A549 (cell line): ENCODE measurements at regions of chr20 and their contacts with region 1.

Region 1: DNA sequence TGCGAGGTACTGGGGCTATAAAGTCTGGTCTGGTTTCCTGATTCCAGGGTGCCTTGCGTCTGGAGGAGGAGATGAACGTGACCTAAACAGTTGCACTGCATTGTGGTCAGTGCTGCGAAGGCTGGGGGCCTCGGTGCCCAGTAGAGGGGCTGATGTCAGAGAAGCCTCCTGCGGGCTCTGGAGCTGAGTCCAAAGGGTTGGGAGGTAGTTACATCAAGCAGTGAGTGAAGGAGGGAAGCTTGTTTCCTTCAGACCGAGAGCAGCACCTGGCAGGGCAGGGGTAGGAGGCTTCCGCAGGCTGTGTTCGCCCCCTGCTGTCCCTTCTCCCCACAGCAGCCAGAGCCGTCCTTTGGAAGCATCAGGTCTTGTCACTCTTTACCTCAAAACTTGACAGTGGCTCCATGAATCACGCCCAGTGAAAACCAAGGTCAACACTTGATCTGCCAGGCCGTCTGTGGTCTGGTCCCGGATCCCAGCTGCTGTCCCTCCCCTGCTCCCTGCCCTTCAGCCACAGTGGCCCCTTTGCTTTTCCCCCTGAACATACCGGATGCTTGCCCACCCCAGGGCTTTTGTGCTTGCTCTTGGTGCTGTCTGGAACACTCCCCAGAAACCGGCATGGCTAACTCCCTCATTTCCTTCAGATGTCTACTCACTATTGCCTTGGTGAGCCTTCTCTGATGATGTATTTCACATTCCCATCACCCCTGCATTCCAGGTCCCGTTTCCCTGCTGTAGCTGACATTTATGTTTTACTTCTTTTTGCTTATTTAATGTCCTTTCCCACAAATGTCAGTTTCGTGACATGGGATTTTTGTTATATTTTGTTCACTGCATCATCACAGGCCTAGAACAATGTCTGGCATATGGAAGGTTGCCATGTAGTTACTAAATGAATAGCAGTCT is 7.0 kb downstream of the DYNLRB1 start:
- DNase-seq: peak; percentile 57 to 82
- ATAC-seq: peak; percentile 54 to 73
- H3K4me3 ChIP-seq: no peak overlapping the region
- H3K27ac ChIP-seq: 0 out of 6 replicates have a peak overlapping the region, but pooled peaks of 1 of the 2 experiments have one; percentile 12
- H3K4me1 ChIP-seq: peaks cover 50% of the 10 kb centered on the region
- CTCF ChIP-seq: peak; percentile 60
- EP300 ChIP-seq: no peak
- POLR2A ChIP-seq: no peak
- RAD21 ChIP-seq: peak; percentile 78 to 91

Region 2: GRCh38 chr20:34190679-34191090 is 332.5 kb before region 1 on chr20:
- CTCF ChIA-PET with region 1: interaction called, 13 read pairs
- POLR2A ChIA-PET with region 1: interaction called, 3 read pairs
- DNase-seq: peak; percentile 82 to 88
- ATAC-seq: peak; percentile 97 to 99
- H3K4me3 ChIP-seq: no peak overlapping the region
- H3K27ac ChIP-seq: no peak overlapping the region
- H3K4me1 ChIP-seq: no peaks in the 10 kb centered on the region
- CTCF ChIP-seq: peak; percentile 82
- EP300 ChIP-seq: no peak
- POLR2A ChIP-seq: no peak
- RAD21 ChIP-seq: peak; percentile 91 to 93

Region 3: GRCh38 chr20:34302723-34303528 is 220.3 kb before region 1 on chr20 and contains the start of gene AHCY:
- CTCF ChIA-PET with region 1: interaction called, 13 read pairs
- POLR2A ChIA-PET with region 1: no interaction called
- DNase-seq: peak; percentile 95 to 98
- ATAC-seq: peak; percentile 96
- H3K4me3 ChIP-seq: peak within 1 kb of the TSS; percentile 90
- H3K27ac ChIP-seq: peak within 1 kb of the TSS; percentile 87 to 94
- H3K4me1 ChIP-seq: peaks cover 36% of the 10 kb centered on the region
- CTCF ChIP-seq: no peak
- EP300 ChIP-seq: no peak
- POLR2A ChIP-seq: peak; percentile 89
- RAD21 ChIP-seq: no peak
- polyA plus RNA-seq, gene AHCY: 274 and 278 TPM in 2 replicates

Region 4: GRCh38 chr20:34506480-34506879 is 16.7 kb before region 1 on chr20:
- CTCF ChIA-PET with region 1: interaction called, 11 read pairs
- POLR2A ChIA-PET with region 1: no interaction called
- DNase-seq: no peak
- ATAC-seq: no peak
- H3K4me3 ChIP-seq: no peak overlapping the region
- H3K27ac ChIP-seq: no peak overlapping the region
- H3K4me1 ChIP-seq: no peaks in the 10 kb centered on the region
- CTCF ChIP-seq: no peak
- EP300 ChIP-seq: no peak
- POLR2A ChIP-seq: no peak
- RAD21 ChIP-seq: no peak

Region 5: DNA sequence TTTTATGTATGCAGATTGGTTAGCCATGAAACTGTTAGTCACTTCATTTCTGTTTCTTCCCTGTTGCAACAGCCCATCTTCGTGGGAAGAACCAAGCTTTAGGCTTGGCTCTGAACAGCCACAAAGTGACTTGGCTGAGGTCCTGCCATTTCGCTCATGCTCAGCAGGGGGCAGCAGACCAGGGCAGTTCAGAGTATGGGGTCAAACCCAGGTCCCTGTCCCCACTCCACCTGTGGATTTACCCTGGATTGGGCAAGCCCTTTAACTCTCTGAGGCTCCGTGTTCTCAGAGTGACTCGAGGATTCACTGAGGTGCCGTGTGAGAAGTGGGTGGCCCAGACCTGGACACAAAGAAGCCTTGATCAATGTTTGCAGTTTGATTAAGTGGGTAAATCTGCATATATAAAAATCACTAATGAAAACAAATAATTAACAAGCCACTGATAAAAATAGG is 15.5 kb after region 1 on chr20:
- CTCF ChIA-PET with region 1: interaction called, 22 read pairs
- POLR2A ChIA-PET with region 1: no interaction called
- DNase-seq: peak in 1 of 2 experiments; percentile 64
- ATAC-seq: peak; percentile 52 to 69; a peak in 3 of 6 replicates
- H3K4me3 ChIP-seq: no peak overlapping the region
- H3K27ac ChIP-seq: no peak overlapping the region
- H3K4me1 ChIP-seq: no peaks in the 10 kb centered on the region
- CTCF ChIP-seq: peak; percentile 72
- EP300 ChIP-seq: no peak
- POLR2A ChIP-seq: no peak
- RAD21 ChIP-seq: peak; percentile 49 to 59